ENCODE measurements at regions of chr12 and their contacts with region 1.

Region 1: GRCh38 chr12:51047655-51048540 is at the start of gene LETMD1:
- DNase-seq: peak; percentile 97 to 98
- ATAC-seq: peak; percentile 99
- H3K4me3 ChIP-seq: peak within 1 kb of the TSS; percentile 79 to 95 (median 81)
- H3K27ac ChIP-seq: peak within 1 kb of the TSS; percentile 88 to 99 (median 98)
- H3K4me1 ChIP-seq: peaks cover 22 to 30% of the 10 kb centered on the region in 2 donors
- H3K27me3 ChIP-seq: no peaks in the 10 kb centered on the region
- CTCF ChIP-seq: peak; percentile 87 to 98 (median 92)
- POLR2A ChIP-seq: peak; percentile 77 to 79
- total RNA-seq, gene LETMD1: 22.5 to 42.4 (median 29.8) TPM

Region 2: GRCh38 chr12:51025836-51026638 is 21.9 kb before region 1 on chr12 and contains the start of gene SLC11A2:
- in situ Hi-C with region 1: no loop called
- intact Hi-C with region 1: loop called (anchors 2 kb)
- DNase-seq: peak; percentile 97 to 98
- ATAC-seq: peak; percentile 74
- H3K4me3 ChIP-seq: peak within 1 kb of the TSS; percentile 72 to 97 (median 90)
- H3K27ac ChIP-seq: peak within 1 kb of the TSS; percentile 93 to 100 (median 97)
- H3K4me1 ChIP-seq: peaks cover 27 to 33% of the 10 kb centered on the region in 2 donors
- H3K27me3 ChIP-seq: no peaks in the 10 kb centered on the region
- CTCF ChIP-seq: peak in 2 of 5 experiments; percentile 6 to 27
- POLR2A ChIP-seq: peak; percentile 79 to 88
- total RNA-seq, gene SLC11A2: 24.0 to 65.4 (median 47.0) TPM

Region 3: GRCh38 chr12:51083126-51083833 is 35.4 kb after region 1 on chr12 and contains the start of gene CSRNP2:
- in situ Hi-C with region 1: no loop called
- intact Hi-C with region 1: loop called (anchors 1 kb)
- DNase-seq: peak; percentile 96
- ATAC-seq: peak; percentile 94 to 96
- H3K4me3 ChIP-seq: peak within 1 kb of the TSS; percentile 91 to 98 (median 94)
- H3K27ac ChIP-seq: peak within 1 kb of the TSS; percentile 87 to 97 (median 94)
- H3K4me1 ChIP-seq: peaks cover 17 to 28% of the 10 kb centered on the region in 2 donors
- H3K27me3 ChIP-seq: no peaks in the 10 kb centered on the region
- CTCF ChIP-seq: peak in 1 of 5 experiments; percentile 12
- POLR2A ChIP-seq: peak; percentile 100
- total RNA-seq, gene CSRNP2: 17.3 to 29.5 (median 22.0) TPM

Region 4: DNA sequence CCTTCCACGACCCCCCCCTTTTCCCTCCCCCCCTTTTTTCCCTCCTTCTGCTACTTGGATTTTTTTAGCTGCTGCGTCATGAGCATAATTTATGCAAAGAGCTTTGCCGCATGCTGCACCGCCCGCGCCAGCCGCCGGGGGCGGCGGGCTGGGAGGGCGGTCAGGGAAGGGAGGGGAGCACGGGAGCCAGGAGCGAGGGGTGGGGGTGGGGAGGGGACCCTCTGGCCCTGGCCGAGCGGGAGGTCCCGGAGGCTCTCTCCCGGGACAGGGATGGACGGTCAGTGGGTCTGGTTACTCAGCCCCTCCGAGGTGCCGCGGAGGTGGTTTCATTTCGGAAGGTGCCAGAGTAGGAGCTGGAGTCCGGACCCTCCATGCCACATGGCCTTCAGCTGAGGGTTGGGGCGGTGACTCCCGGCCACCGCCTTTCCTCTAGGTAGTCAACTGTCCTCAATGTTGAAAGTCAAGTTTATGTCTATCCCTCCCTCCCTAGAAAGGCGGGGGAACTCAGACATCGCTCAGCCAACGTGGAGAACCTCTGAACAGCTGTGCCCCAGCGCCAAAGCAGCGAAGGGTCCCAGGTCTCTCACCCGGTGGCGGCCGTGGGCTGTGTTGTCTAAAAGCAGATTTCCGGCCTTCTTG is 170.2 kb after region 1 on chr12 and contains the start of gene POU6F1:
- in situ Hi-C with region 1: no loop called
- intact Hi-C with region 1: loop called (anchors 1 kb)
- DNase-seq: peak; percentile 52 to 77
- ATAC-seq: peak; percentile 87 to 88
- H3K4me3 ChIP-seq: peak within 1 kb of the TSS; percentile 85 to 98 (median 89)
- H3K27ac ChIP-seq: peak within 1 kb of the TSS; percentile 98 to 100 (median 99)
- H3K4me1 ChIP-seq: peaks cover 17 to 19% of the 10 kb centered on the region in 2 donors
- H3K27me3 ChIP-seq: no peaks in the 10 kb centered on the region
- CTCF ChIP-seq: peak; percentile 31 to 92 (median 65)
- POLR2A ChIP-seq: peak; percentile 68 to 74
- total RNA-seq, gene POU6F1: 8.1 to 11.1 (median 9.9) TPM

Region 5: DNA sequence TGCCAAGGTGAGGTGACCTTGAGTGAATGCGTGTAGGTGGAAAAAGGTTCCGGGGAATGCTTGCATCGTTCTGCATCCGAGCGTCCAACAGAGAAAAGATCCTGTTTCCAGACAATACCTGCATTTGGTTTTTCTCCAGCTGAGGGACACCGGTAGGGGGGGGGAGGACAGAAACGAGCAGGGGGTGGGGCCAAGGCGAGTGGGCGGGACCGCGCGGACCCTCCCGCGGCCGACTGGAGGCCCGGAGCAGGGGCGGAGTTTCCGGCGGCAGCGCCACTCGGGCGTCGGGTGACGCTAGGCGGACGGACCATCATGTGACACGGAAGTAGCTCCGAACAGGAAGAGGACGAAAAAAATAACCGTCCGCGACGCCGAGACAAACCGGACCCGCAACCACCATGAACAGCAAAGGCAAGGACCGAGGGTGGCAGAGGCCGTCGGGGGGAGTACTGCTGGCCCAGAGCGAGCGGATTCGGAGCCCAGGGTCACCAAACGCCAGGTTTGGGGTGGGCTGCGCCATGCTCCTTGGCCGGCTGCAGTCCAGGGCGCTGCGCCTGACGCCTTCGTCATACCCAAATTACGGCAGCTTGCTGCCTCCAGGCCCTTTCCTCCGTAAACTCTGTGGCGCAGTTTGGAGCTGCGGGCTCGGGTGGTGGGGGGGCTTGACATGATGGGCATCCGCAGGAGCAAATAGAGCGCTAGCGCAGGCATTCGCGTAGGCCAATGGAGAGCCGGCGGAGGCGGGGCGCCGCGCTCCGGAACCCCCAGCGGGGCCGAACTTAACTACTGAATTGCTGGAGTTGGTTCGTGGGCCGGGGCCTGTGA is 190.8 kb after region 1 on chr12 and contains the start of gene DAZAP2:
- in situ Hi-C with region 1: no loop called
- intact Hi-C with region 1: loop called (anchors 1 kb)
- DNase-seq: peak; percentile 94 to 97
- ATAC-seq: peak; percentile 94 to 96
- H3K4me3 ChIP-seq: peak within 1 kb of the TSS; percentile 94 to 100 (median 97)
- H3K27ac ChIP-seq: peak within 1 kb of the TSS; percentile 98 to 100 (median 100)
- H3K4me1 ChIP-seq: peaks cover 19 to 26% of the 10 kb centered on the region in 2 donors
- H3K27me3 ChIP-seq: no peaks in the 10 kb centered on the region
- CTCF ChIP-seq: peak; percentile 6 to 49 (median 17)
- POLR2A ChIP-seq: peak; percentile 92 to 98
- total RNA-seq, gene DAZAP2: 204 to 274 (median 246) TPM

Measured in gastrocnemius medialis (tissue), 4 donors.